SK-N-SH (cell line): ENCODE measurements at regions of chr3 and their contacts with region 1.

Region 1: DNA sequence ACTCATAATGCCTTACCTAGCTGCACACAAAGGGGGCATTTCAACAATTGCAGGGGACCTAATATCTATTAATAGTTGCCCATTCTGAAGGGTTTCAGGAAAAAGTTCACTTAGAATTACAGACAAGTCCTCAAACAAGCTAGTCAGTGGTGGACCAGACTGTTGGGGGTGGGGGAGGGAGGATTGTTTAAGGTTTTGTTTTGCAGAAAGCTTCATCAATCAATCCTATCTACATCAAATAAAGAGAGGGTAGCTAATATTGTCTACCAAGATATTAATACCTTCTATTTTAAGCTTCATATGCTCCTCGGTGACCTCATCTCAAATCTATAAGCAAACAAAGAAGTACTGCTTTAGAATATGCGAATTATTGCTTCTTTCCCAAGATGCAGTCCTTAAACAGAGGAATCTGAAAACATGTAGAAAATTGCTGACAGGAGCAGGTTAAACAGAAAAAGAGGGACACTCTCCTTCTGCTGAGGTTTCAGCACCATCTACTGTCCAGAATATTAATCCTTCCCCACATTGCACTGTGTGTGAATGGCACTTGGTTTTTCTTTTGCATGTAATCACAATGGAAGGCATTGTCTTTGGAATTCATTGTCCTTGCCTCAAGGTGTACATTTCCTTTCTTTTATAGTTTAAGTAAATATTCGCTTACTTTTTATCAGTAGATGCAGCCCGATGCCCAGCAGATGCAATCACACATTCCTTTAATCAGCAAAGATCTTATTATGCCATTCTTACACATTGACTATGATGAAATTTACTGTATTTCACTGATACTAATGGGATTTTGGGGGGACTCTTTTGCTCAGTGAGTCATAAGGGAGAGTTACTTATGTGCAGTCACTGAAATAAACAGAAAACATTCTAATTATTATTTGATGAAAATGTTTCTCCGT is 94.7 kb downstream of the IL5RA start:
- DNase-seq: peak; percentile 58
- H3K4me3 ChIP-seq: peak overlapping the region in 1 of 2 experiments; percentile 32; a peak in 1 of 4 replicates
- H3K27ac ChIP-seq: no peak overlapping the region
- H3K4me1 ChIP-seq: no peaks in the 10 kb centered on the region; a peak in 1 of 4 replicates
- H3K27me3 ChIP-seq: no peaks in the 10 kb centered on the region
- CTCF ChIP-seq: peak; percentile 39
- EP300 ChIP-seq: no peak
- RAD21 ChIP-seq: peak; percentile 98

Region 2: GRCh38 chr3:3005146-3005744 is 10.2 kb before region 1 on chr3:
- CTCF ChIA-PET with region 1: interaction called, 15 read pairs
- POLR2A ChIA-PET with region 1: no interaction called
- DNase-seq: no peak
- H3K4me3 ChIP-seq: no peak overlapping the region
- H3K27ac ChIP-seq: no peak overlapping the region
- H3K4me1 ChIP-seq: no peaks in the 10 kb centered on the region
- H3K27me3 ChIP-seq: no peaks in the 10 kb centered on the region
- CTCF ChIP-seq: no peak
- EP300 ChIP-seq: no peak
- RAD21 ChIP-seq: no peak

Region 3: DNA sequence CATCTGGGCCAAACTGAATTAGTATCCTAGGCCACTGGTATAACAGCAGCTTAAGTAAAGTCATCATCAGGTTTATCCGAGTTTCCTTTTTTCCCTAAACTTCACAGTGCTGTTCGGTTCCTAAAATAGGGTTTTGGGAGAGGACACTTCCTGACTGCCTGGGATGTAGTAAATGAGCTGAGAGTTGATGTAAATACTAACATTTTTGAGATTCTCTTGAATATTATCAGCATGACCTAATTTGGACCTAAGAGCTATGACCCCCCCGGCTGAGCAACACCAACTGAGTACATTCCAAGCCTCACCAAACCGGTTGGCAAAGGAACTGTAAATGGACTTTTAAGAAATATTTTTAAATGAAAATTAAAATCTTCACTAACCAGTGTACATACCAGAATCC is 15.9 kb after region 1 on chr3:
- CTCF ChIA-PET with region 1: interaction called, 12 read pairs
- POLR2A ChIA-PET with region 1: no interaction called
- DNase-seq: no peak
- H3K4me3 ChIP-seq: no peak overlapping the region
- H3K27ac ChIP-seq: peak overlapping the region in 1 of 2 experiments; percentile 47; a peak in 2 of 4 replicates
- H3K4me1 ChIP-seq: peaks cover 0 to 8% of the 10 kb centered on the region in 2 experiments; a peak in 1 of 4 replicates
- H3K27me3 ChIP-seq: no peaks in the 10 kb centered on the region
- CTCF ChIP-seq: no peak
- EP300 ChIP-seq: no peak
- RAD21 ChIP-seq: no peak